Posterior vena cava (tissue), 2 donors: ENCODE measurements at regions of chr22 and their contacts with region 1.

Region 1: GRCh38 chr22:45787759-45788158 is 116.1 kb downstream of the ATXN10 start:
- DNase-seq: no peak

Region 2: DNA sequence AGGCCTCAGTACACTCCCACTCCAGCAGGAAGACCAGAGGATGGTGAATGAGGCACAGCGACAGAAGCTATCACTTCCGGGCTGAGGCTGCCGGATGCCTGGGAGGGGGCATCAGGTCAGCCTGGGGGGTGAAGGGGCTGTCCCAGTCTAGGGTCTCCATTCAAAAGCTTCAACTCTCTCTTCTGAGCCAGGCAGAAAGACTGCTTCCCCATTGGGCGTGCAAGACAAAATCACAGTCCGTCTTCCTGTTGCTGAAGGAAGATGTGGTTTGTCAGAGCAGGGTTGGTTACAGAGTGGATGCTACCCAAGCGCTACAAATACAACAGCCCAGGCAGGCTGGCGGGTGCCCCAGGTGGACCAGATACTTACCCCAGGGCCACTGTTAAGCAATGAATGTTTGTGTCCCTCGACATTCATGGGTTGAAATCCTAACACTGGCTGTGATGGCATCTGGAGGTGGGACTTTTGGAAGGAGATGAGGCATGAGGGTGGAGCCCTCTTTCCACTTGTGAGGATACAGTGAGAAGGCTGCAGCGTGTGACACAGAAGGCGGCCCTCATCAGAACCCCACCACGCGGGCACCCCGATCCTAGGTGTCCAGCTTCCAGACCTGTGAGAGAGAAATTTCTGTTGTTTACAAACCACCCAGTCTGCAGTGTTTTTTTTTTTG is 491.0 kb before region 1 on chr22:
- intact Hi-C with region 1: no loop called
- DNase-seq: no peak

Region 3: DNA sequence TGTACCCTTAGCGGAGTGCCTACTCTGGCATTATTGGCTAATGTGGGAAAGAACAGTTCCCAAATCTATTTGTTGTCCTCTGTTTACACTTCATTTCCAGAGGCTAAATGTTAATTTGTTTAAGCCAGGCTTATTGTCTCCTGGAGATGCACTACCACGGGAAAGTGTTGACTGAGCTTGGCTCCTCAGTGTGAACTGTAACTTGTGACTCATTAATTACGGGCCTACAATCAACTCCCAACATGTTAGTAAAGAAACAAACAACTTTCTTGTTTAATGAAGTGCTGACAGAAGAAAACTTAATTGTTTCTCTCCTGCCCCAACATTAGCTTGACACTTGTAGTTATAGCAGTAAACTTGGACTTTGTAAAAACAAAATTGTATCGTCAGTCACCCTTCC is 14.3 kb after region 1 on chr22:
- intact Hi-C with region 1: loop called in 1 of 2 experiments (anchors 1 kb)
- DNase-seq: no peak